Caco-2 (cell line): ENCODE measurements at regions of chr1 and their contacts with region 1.

Region 1: GRCh38 chr1:100921109-100921706 is 25.3 kb downstream of the SLC30A7 start:
- DNase-seq: peak in 1 of 2 experiments; percentile 42
- H3K4me3 ChIP-seq: no peak overlapping the region
- H3K4me3 Mint-ChIP-seq: no peak overlapping the region
- H3K27ac Mint-ChIP-seq: no peak overlapping the region
- H3K4me1 ChIP-seq: no peaks in the 10 kb centered on the region
- H3K4me1 Mint-ChIP-seq: no peaks in the 10 kb centered on the region
- H3K27me3 ChIP-seq: no peaks in the 10 kb centered on the region
- H3K27me3 Mint-ChIP-seq: no peaks in the 10 kb centered on the region
- CTCF ChIP-seq: peak; percentile 25 to 43

Region 2: DNA sequence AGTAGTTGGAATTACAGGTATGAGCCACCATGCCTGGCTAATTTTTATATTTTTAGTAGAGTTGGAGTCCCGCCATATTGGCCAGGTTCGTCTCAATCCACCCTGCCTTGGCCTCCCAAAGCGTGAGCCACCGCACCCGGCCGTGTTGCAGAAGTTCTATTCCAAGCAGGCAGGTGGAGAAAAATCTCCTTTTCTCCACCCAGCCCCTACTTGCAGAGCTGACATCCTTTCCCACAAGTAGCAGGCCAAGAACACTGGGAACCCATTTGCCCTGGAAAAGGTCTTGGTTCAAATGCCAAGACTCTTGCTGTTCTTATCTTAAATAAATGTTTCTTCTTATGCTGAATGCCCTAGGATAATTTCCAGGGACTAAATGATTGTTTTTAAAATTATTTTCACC is 1053.5 kb before region 1 on chr1:
- CTCF ChIA-PET with region 1: no interaction called
- POLR2A ChIA-PET with region 1: no interaction called
- intact Hi-C with region 1: no loop called
- DNase-seq: no peak
- H3K4me3 ChIP-seq: no peak overlapping the region
- H3K4me3 Mint-ChIP-seq: no peak overlapping the region
- H3K27ac Mint-ChIP-seq: no peak overlapping the region
- H3K4me1 ChIP-seq: no peaks in the 10 kb centered on the region
- H3K4me1 Mint-ChIP-seq: no peaks in the 10 kb centered on the region
- H3K27me3 ChIP-seq: no peaks in the 10 kb centered on the region
- H3K27me3 Mint-ChIP-seq: no peaks in the 10 kb centered on the region
- CTCF ChIP-seq: no peak

Region 3: GRCh38 chr1:101238681-101239094 is 317.5 kb after region 1 on chr1:
- CTCF ChIA-PET with region 1: no interaction called
- POLR2A ChIA-PET with region 1: no interaction called
- intact Hi-C with region 1: loop called (anchors 2 kb)
- DNase-seq: peak; percentile 69 to 77
- H3K4me3 ChIP-seq: no peak overlapping the region
- H3K4me3 Mint-ChIP-seq: no peak overlapping the region
- H3K27ac Mint-ChIP-seq: no peak overlapping the region
- H3K4me1 ChIP-seq: 0 out of 2 replicates have a peak, but pooled peaks cover 5% of the 10 kb centered on the region
- H3K4me1 Mint-ChIP-seq: peaks cover 12% of the 10 kb centered on the region
- H3K27me3 ChIP-seq: no peaks in the 10 kb centered on the region; the same call in 1 of the 2 replicates
- H3K27me3 Mint-ChIP-seq: peaks cover 20% of the 10 kb centered on the region
- CTCF ChIP-seq: peak; percentile 70 to 75

Region 4: GRCh38 chr1:101357444-101357986 is 436.3 kb after region 1 on chr1:
- CTCF ChIA-PET with region 1: no interaction called
- POLR2A ChIA-PET with region 1: no interaction called
- intact Hi-C with region 1: loop called (anchors 2 kb)
- DNase-seq: peak; percentile 54 to 69
- H3K4me3 ChIP-seq: no peak overlapping the region
- H3K4me3 Mint-ChIP-seq: no peak overlapping the region
- H3K27ac Mint-ChIP-seq: no peak overlapping the region
- H3K4me1 ChIP-seq: no peaks in the 10 kb centered on the region
- H3K4me1 Mint-ChIP-seq: no peaks in the 10 kb centered on the region
- H3K27me3 ChIP-seq: no peaks in the 10 kb centered on the region
- H3K27me3 Mint-ChIP-seq: peaks cover 4% of the 10 kb centered on the region
- CTCF ChIP-seq: peak; percentile 50 to 53